Activated CD8-positive, alpha-beta memory T cell treated with anti-CD3 and anti-CD28 coated beads, Interleukin-2, amount 10 ng/mL, durations not matched to agents 7 days and 5 days (primary cell): ENCODE measurements at regions of chr4 and their contacts with region 1.

Region 1: GRCh38 chr4:121192480-121192879 is 28.4 kb upstream of the TNIP3 start:
- DNase-seq: no peak
- ATAC-seq: peak; percentile 10
- H3K4me3 Mint-ChIP-seq: peak overlapping the region; percentile 41
- H3K27ac Mint-ChIP-seq: peak overlapping the region; percentile 81
- H3K4me1 Mint-ChIP-seq: peaks cover 75% of the 10 kb centered on the region
- H3K27me3 Mint-ChIP-seq: no peaks in the 10 kb centered on the region

Region 2: GRCh38 chr4:121182296-121182695 is 10.2 kb before region 1 on chr4:
- CTCF ChIA-PET with region 1: interaction called, 14 read pairs
- DNase-seq: no peak
- ATAC-seq: peak; percentile 67
- H3K4me3 Mint-ChIP-seq: peak overlapping the region; percentile 83
- H3K27ac Mint-ChIP-seq: peak overlapping the region; percentile 97
- H3K4me1 Mint-ChIP-seq: peaks cover 70% of the 10 kb centered on the region
- H3K27me3 Mint-ChIP-seq: no peaks in the 10 kb centered on the region

Region 3: GRCh38 chr4:121227341-121227792 is 34.9 kb after region 1 on chr4:
- CTCF ChIA-PET with region 1: interaction called, 57 read pairs
- DNase-seq: no peak
- ATAC-seq: peak; percentile 69
- H3K4me3 Mint-ChIP-seq: peak overlapping the region; percentile 80
- H3K27ac Mint-ChIP-seq: peak overlapping the region; percentile 99
- H3K4me1 Mint-ChIP-seq: peaks cover 44% of the 10 kb centered on the region
- H3K27me3 Mint-ChIP-seq: no peaks in the 10 kb centered on the region

Region 4: DNA sequence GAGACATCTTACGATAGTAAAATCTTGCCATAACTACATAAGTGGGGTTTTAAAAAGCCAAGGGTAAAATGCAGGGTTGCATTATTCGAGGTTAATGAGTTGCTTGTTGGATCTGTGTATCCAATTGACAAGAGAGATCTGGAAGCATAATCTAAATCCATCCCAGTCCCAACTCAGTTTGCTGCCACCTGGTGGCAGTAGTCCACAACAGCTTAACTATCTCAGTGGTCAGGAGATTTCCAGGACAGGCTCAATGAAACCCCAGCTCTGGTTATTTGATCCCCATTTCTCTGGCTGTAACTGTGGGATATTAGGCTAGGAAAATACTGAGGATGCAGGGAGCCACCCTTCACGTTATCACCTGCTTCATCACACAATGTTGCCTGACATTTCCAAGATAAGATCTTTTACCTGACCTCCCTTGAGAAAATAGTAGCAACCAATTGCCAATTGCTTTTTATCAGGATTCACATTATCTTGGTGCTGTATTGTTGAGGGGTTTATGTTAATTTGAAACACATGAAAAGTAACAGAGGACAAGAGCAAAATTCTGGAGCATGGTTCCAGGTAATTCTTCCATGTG is 59.8 kb after region 1 on chr4:
- CTCF ChIA-PET with region 1: interaction called, 142 read pairs
- DNase-seq: peak; percentile 77
- ATAC-seq: no peak
- H3K4me3 Mint-ChIP-seq: no peak overlapping the region
- H3K27ac Mint-ChIP-seq: peak overlapping the region; percentile 71
- H3K4me1 Mint-ChIP-seq: peaks cover 75% of the 10 kb centered on the region
- H3K27me3 Mint-ChIP-seq: no peaks in the 10 kb centered on the region